ENCODE measurements at regions of chr12 and their contacts with region 1.

Region 1: DNA sequence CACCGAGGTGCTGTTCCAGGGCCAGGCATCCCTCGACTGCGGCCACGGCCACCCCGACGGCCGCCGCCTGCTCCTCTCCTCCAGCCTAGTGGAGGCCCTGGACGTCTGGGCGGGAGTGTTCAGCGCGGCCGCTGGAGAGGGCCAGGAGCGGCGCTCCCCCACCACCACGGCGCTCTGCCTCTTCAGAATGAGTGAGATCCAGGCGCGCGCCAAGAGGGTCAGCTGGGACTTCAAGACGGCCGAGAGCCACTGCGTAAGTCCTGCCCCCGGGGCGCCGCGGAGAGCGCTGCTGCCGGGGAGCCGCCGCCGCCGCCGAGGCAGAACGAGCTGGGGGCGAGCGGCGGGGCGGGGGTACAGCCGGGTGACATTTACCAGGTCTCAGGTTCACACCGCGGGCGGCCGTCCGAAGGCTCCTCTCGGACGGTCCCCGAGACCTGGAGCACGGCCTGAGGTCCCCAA is 1.4 kb downstream of the PLXNC1 start:
- DNase-seq: peak; percentile 71
- ATAC-seq: peak; percentile 28
- H3K4me3 ChIP-seq: peak overlapping the region; percentile 61
- H3K27ac ChIP-seq: peak overlapping the region; percentile 14
- H3K4me1 ChIP-seq: peaks cover 14% of the 10 kb centered on the region
- H3K27me3 ChIP-seq: peaks cover 19% of the 10 kb centered on the region
- CTCF ChIP-seq: no peak

Region 2: DNA sequence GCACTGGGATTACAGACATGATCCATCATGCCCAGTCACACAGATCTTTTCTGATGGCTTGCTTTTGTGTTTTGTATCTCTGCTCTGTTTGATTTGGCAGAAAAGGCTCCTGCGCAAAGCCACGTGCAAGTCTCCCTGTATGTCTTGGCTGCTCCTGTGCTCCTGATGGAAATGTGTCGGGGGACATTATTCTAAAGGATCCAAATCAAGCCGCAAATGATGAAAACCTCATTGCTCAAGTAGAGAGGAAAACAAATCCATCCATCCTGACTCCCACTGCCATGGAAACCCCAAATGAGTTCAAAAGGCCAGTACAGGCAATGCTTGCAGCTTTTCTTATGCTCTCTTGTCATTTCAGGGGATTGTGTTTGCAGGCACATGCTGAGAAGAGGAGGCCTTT is 759.9 kb after region 1 on chr12:
- intact Hi-C with region 1: loop called (anchors 5 kb)
- DNase-seq: no peak
- ATAC-seq: no peak
- H3K4me3 ChIP-seq: no peak overlapping the region
- H3K27ac ChIP-seq: no peak overlapping the region
- H3K4me1 ChIP-seq: no peaks in the 10 kb centered on the region
- H3K27me3 ChIP-seq: no peaks in the 10 kb centered on the region
- CTCF ChIP-seq: no peak